ENCODE measurements at regions of chr10 and their contacts with region 1.

Region 1: GRCh38 chr10:87817609-87818504 is at the start of gene ATAD1:
- DNase-seq: peak; percentile 79 to 93 (median 91)
- ATAC-seq: peak; percentile 92
- H3K4me3 ChIP-seq: peak within 1 kb of the TSS; percentile 75
- H3K4me3 Mint-ChIP-seq: peak within 1 kb of the TSS; percentile 90 to 100 (median 94)
- H3K27ac ChIP-seq: peak within 1 kb of the TSS; percentile 89
- H3K27ac Mint-ChIP-seq: peak within 1 kb of the TSS; percentile 93 to 100 (median 98)
- H3K4me1 ChIP-seq: peaks cover 13 to 33% of the 10 kb centered on the region in 2 donors
- H3K4me1 Mint-ChIP-seq: peaks cover 22 to 56% (median 41%) of the 10 kb centered on the region in 7 donors
- H3K27me3 ChIP-seq: no peaks in the 10 kb centered on the region
- H3K27me3 Mint-ChIP-seq: peaks cover 0 to 2% (median 0%) of the 10 kb centered on the region in 5 donors
- total RNA-seq, gene ATAD1: 33.5 to 53.4 (median 46.1) TPM

Region 2: GRCh38 chr10:87504640-87505365 is 313.1 kb before region 1 on chr10 and contains the start of gene MINPP1:
- CTCF ChIA-PET with region 1: no interaction called
- POLR2A ChIA-PET with region 1: no interaction called
- intact Hi-C with region 1: loop called in 1 of 2 experiments (anchors 1 kb)
- DNase-seq: peak; percentile 38 to 86 (median 48)
- ATAC-seq: peak; percentile 80
- H3K4me3 ChIP-seq: peak within 1 kb of the TSS; percentile 87
- H3K4me3 Mint-ChIP-seq: peak within 1 kb of the TSS; percentile 86 to 97 (median 92)
- H3K27ac ChIP-seq: peak within 1 kb of the TSS; percentile 59
- H3K27ac Mint-ChIP-seq: peak within 1 kb of the TSS; percentile 54 to 93 (median 75)
- H3K4me1 ChIP-seq: peaks cover 12 to 13% of the 10 kb centered on the region in 2 donors
- H3K4me1 Mint-ChIP-seq: peaks cover 23 to 56% (median 39%) of the 10 kb centered on the region in 7 donors
- H3K27me3 ChIP-seq: no peaks in the 10 kb centered on the region
- H3K27me3 Mint-ChIP-seq: peaks cover 0 to 24% (median 0%) of the 10 kb centered on the region in 5 donors
- total RNA-seq, gene MINPP1: 1.8 to 9.5 (median 9.2) TPM

Region 3: GRCh38 chr10:87519582-87519981 is 298.3 kb before region 1 on chr10:
- CTCF ChIA-PET with region 1: no interaction called
- POLR2A ChIA-PET with region 1: no interaction called
- intact Hi-C with region 1: no loop called
- DNase-seq: no peak
- ATAC-seq: no peak
- H3K4me3 ChIP-seq: no peak overlapping the region
- H3K4me3 Mint-ChIP-seq: no peak overlapping the region
- H3K27ac ChIP-seq: no peak overlapping the region
- H3K27ac Mint-ChIP-seq: no peak overlapping the region
- H3K4me1 ChIP-seq: no peaks in the 10 kb centered on the region
- H3K4me1 Mint-ChIP-seq: peaks cover 0 to 9% (median 0%) of the 10 kb centered on the region in 7 donors
- H3K27me3 ChIP-seq: no peaks in the 10 kb centered on the region
- H3K27me3 Mint-ChIP-seq: no peaks in the 10 kb centered on the region

Region 4: DNA sequence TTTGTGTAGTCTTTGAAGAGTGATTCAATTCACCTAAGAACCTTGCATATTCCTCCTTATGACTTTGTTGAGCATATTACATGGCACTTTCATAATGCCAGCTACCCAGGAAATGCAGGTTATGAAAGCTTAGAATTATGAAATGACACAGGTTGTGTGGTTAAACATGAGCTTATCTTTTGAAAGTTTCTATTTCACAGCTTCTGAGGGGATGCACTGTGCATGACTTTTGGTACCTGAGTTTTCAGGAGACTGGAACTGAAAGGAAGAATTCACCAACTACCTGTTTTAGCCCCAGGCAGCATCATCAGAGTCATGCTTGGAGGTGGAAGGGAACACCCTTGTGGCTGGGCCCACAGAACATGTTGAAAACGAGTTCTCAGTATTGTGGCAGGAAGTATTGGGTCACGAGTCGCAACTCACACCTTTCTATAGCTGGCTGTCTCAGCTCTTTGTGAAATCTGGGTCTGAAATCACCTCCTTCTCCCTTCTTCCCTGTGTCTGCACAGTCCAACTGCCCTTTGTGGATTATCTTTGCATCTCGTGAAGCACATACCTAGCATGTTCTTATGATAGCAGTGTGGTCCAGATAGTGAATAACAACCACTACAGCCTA is 273.7 kb after region 1 on chr10:
- CTCF ChIA-PET with region 1: no interaction called
- POLR2A ChIA-PET with region 1: interaction called, 4 read pairs
- intact Hi-C with region 1: loop called in 1 of 2 experiments (anchors 1 kb)
- DNase-seq: peak in 8 of 9 donors; percentile 64 to 85 (median 76)
- ATAC-seq: peak; percentile 95
- H3K4me3 ChIP-seq: no peak overlapping the region
- H3K4me3 Mint-ChIP-seq: peak overlapping the region; percentile 18 to 72 (median 52)
- H3K27ac ChIP-seq: peak overlapping the region; percentile 53
- H3K27ac Mint-ChIP-seq: peak overlapping the region; percentile 76 to 94 (median 90)
- H3K4me1 ChIP-seq: peaks cover 33 to 36% of the 10 kb centered on the region in 2 donors
- H3K4me1 Mint-ChIP-seq: peaks cover 35 to 64% (median 42%) of the 10 kb centered on the region in 7 donors
- H3K27me3 ChIP-seq: no peaks in the 10 kb centered on the region
- H3K27me3 Mint-ChIP-seq: peaks cover 0 to 49% (median 0%) of the 10 kb centered on the region in 5 donors

Region 5: GRCh38 chr10:88582806-88583583 is 765.1 kb after region 1 on chr10 and contains the start of gene RNLS:
- CTCF ChIA-PET with region 1: no interaction called
- POLR2A ChIA-PET with region 1: interaction called, 10 read pairs
- intact Hi-C with region 1: loop called in 1 of 2 experiments (anchors 1 kb)
- DNase-seq: peak; percentile 46 to 66 (median 62)
- ATAC-seq: peak; percentile 90
- H3K4me3 ChIP-seq: peak within 1 kb of the TSS; percentile 90
- H3K4me3 Mint-ChIP-seq: peak within 1 kb of the TSS; percentile 88 to 95 (median 90)
- H3K27ac ChIP-seq: peak within 1 kb of the TSS; percentile 80
- H3K27ac Mint-ChIP-seq: peak within 1 kb of the TSS; percentile 84 to 97 (median 91)
- H3K4me1 ChIP-seq: peaks cover 6 to 8% of the 10 kb centered on the region in 2 donors
- H3K4me1 Mint-ChIP-seq: peaks cover 8 to 16% (median 12%) of the 10 kb centered on the region in 7 donors
- H3K27me3 ChIP-seq: no peaks in the 10 kb centered on the region
- H3K27me3 Mint-ChIP-seq: peaks cover 0 to 19% (median 4%) of the 10 kb centered on the region in 5 donors
- total RNA-seq, gene RNLS: 1.5 to 3.6 (median 2.9) TPM

Region 6: GRCh38 chr10:89251409-89252224 is 1433.8 kb after region 1 on chr10 and contains the start of gene LIPA:
- CTCF ChIA-PET with region 1: no interaction called
- POLR2A ChIA-PET with region 1: no interaction called
- intact Hi-C with region 1: loop called in 1 of 2 experiments (anchors 5 kb)
- DNase-seq: peak; percentile 78 to 97 (median 94)
- ATAC-seq: peak; percentile 97
- H3K4me3 ChIP-seq: peak within 1 kb of the TSS; percentile 80
- H3K4me3 Mint-ChIP-seq: peak within 1 kb of the TSS; percentile 82 to 91 (median 90)
- H3K27ac ChIP-seq: peak within 1 kb of the TSS; percentile 76
- H3K27ac Mint-ChIP-seq: peak within 1 kb of the TSS; percentile 38 to 90 (median 84)
- H3K4me1 ChIP-seq: peaks cover 8 to 9% of the 10 kb centered on the region in 2 donors
- H3K4me1 Mint-ChIP-seq: peaks cover 17 to 32% (median 22%) of the 10 kb centered on the region in 7 donors
- H3K27me3 ChIP-seq: no peaks in the 10 kb centered on the region
- H3K27me3 Mint-ChIP-seq: peaks cover 0 to 9% (median 0%) of the 10 kb centered on the region in 5 donors
- total RNA-seq, gene LIPA: 19.9 to 49.9 (median 48.3) TPM

Measured in naive thymus-derived CD4-positive, alpha-beta T cell (primary cell).